ENCODE measurements at regions of chr18 and their contacts with region 1.

Region 1: GRCh38 chr18:63016270-63016669 is 300.9 kb downstream of the PHLPP1 start:
- DNase-seq: peak in 1 of 2 donors; percentile 51
- ATAC-seq: peak in 6 of 8 donors; percentile 58 to 70 (median 66)
- H3K4me3 ChIP-seq: no peak overlapping the region
- H3K27ac ChIP-seq: no peak overlapping the region
- H3K4me1 ChIP-seq: peaks cover 0 to 5% (median 0%) of the 10 kb centered on the region in 9 donors
- H3K27me3 ChIP-seq: peaks cover 0 to 21% (median 6%) of the 10 kb centered on the region in 7 donors
- CTCF ChIP-seq: peak; percentile 56 to 89 (median 85)

Region 2: DNA sequence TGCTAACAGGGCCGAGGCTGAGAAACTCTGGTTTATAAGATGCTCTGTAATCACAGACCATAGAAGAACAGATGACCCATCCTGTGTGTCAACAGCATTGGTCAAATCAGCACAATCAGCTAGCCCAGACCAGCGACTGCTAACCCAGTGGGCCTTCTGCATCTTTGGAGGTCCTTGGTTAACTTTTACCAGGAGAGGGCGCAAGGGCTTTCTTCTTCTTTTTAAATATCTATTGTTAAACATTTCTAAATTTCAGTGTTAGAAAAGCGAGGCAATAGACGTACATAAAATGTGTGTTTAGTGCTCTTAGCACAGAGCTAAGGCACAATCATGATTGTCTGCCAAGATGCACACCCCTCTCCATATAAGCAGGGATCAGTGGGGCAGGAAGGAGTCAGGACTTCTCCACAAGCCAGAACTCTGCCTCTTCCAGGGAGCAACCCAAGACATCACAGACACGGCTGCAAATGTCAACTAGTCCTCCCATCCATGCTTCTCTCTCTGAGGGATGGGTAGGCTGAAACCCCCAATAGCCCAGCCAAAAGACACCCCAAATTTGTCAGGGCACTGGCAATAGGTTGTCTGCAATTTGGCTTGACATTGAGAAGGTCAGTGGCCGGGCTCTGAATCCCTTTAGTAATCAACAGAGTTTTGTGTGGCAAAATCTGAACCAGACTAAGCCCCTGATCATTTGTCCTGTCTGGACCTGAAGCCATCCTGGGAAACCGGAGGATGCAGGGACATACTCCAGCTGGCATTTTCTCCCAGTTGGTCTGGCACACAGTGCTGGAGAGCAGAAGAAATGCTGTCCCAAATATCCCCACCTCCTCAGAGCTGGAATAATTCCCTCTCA is 115.1 kb after region 1 on chr18:
- intact Hi-C with region 1: loop called in 2 of 10 experiments (anchors 10 kb)
- DNase-seq: peak in 1 of 2 donors; percentile 74
- ATAC-seq: peak; percentile 41 to 80 (median 69)
- H3K4me3 ChIP-seq: no peak overlapping the region
- H3K27ac ChIP-seq: peak overlapping the region in 2 of 10 donors; percentile 9 to 15
- H3K4me1 ChIP-seq: peaks cover 3 to 15% (median 8%) of the 10 kb centered on the region in 9 donors
- H3K27me3 ChIP-seq: no peaks in the 10 kb centered on the region
- CTCF ChIP-seq: peak; percentile 41 to 85 (median 75)

Region 3: GRCh38 chr18:63155169-63155852 is 139.0 kb after region 1 on chr18:
- intact Hi-C with region 1: loop called in 2 of 10 experiments (anchors 5 to 10 kb)
- DNase-seq: peak; percentile 52 to 72
- ATAC-seq: peak; percentile 69 to 90 (median 86)
- H3K4me3 ChIP-seq: peak overlapping the region in 9 of 10 donors; percentile 20 to 48 (median 38)
- H3K27ac ChIP-seq: peak overlapping the region in 1 of 10 donors; percentile 86
- H3K4me1 ChIP-seq: peaks cover under 1 to 41% (median 14%) of the 10 kb centered on the region in 9 donors
- H3K27me3 ChIP-seq: no peaks in the 10 kb centered on the region
- CTCF ChIP-seq: peak; percentile 66 to 87 (median 78)

Region 4: GRCh38 chr18:63320046-63320689 is 303.9 kb after region 1 on chr18:
- intact Hi-C with region 1: loop called in 8 of 10 experiments (anchors 1 to 5 kb)
- DNase-seq: peak; percentile 80 to 90
- ATAC-seq: peak; percentile 79 to 88 (median 84)
- H3K4me3 ChIP-seq: peak overlapping the region; percentile 63 to 91 (median 77)
- H3K27ac ChIP-seq: peak overlapping the region; percentile 52 to 89 (median 78)
- H3K4me1 ChIP-seq: peaks cover 0 to 55% (median 34%) of the 10 kb centered on the region in 9 donors
- H3K27me3 ChIP-seq: peaks cover 0 to 8% (median 0%) of the 10 kb centered on the region in 7 donors
- CTCF ChIP-seq: peak in 2 of 9 donors; percentile 20 to 22

Region 5: DNA sequence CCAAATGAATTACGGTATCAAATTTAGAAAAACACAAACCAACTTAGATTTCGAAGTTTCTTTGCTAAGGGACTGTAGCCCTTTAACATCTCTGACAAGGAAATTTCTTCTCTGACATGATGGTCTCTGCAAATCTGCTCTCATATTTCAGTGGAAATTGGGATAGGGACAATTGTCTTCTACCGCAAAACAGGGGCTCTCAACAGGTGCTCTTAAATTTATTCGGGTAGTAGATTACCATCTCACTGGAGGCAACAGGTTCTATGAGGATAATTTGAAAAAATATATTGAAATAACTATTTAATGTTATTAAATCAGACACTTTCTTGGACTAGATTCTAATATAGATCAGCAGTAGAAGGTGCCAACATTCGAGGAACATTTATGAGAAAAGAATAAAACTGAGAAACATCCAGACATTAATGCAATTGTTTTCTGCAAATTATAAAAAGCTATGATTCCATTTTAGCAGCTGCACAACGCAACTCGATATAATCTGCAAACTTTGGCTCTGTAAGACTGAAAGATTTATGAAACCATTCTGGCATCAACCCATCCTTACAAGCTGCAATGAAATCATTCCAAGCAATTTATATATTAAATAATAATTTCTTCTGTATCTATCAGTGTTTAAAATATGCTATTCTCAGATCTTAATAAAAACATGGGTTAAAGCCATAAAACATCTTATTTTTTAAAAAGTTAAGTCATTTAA is 313.3 kb after region 1 on chr18:
- intact Hi-C with region 1: loop called in 6 of 10 experiments (anchors 2 to 5 kb)
- DNase-seq: no peak
- ATAC-seq: no peak
- H3K4me3 ChIP-seq: no peak overlapping the region
- H3K27ac ChIP-seq: no peak overlapping the region
- H3K4me1 ChIP-seq: no peaks in the 10 kb centered on the region
- H3K27me3 ChIP-seq: no peaks in the 10 kb centered on the region
- CTCF ChIP-seq: no peak

Region 6: DNA sequence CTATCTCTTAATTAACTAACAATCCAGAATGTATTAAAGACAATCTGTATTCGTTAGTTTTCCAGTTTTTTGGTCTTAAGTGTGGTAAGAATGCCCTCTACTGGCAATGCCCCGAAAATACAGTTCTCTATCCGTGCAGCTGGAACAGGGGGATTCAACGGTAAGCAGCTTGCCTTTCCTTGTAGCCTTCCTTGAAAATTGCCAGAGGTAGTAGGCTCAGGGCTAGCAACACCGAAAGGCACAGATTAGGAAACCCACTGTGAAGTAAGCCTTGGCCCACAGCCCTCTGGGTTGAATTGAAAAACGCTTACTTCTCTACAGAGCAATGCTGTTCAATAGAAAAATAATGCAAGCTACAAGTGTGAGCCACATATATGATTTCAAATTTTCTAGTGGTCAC is 423.1 kb after region 1 on chr18:
- intact Hi-C with region 1: loop called in 9 of 10 experiments (anchors 2 to 10 kb)
- DNase-seq: peak in 1 of 2 donors; percentile 52
- ATAC-seq: peak in 7 of 8 donors; percentile 54 to 77 (median 69)
- H3K4me3 ChIP-seq: no peak overlapping the region
- H3K27ac ChIP-seq: no peak overlapping the region
- H3K4me1 ChIP-seq: peaks cover 0 to 16% (median 0%) of the 10 kb centered on the region in 9 donors
- H3K27me3 ChIP-seq: peaks cover 0 to 7% (median 0%) of the 10 kb centered on the region in 7 donors
- CTCF ChIP-seq: peak; percentile 54 to 88 (median 83)

Region 7: DNA sequence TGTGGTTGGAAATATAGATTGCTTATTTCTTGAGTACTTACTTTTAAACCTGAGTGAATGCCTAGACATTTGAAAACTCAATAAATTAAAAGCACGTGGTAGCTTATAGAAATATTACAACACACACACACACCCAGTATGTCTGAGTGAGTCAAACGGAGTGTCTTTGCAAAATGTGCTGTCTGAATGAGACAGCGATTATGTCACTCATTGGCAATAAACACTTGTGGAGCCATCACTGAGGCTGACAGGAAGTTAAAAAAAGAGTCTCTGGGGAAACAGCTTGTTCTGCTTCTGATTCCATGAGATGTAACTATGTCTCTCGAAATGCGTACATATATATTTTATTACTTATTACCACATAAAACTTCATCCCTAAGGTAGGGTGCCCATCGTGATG is 428.3 kb after region 1 on chr18:
- intact Hi-C with region 1: loop called in 9 of 10 experiments (anchors 2 to 10 kb)
- DNase-seq: no peak
- ATAC-seq: peak in 6 of 8 donors; percentile 37 to 89 (median 64)
- H3K4me3 ChIP-seq: no peak overlapping the region
- H3K27ac ChIP-seq: peak overlapping the region in 1 of 10 donors; percentile 71
- H3K4me1 ChIP-seq: peaks cover 0 to 27% (median 0%) of the 10 kb centered on the region in 9 donors
- H3K27me3 ChIP-seq: no peaks in the 10 kb centered on the region
- CTCF ChIP-seq: no peak